ENCODE measurements at regions of chr20 and their contacts with region 1.

Region 1: GRCh38 chr20:37527638-37528441 is at the start of gene BLCAP:
- DNase-seq: peak; percentile 94
- ATAC-seq: peak; percentile 89
- H3K4me3 Mint-ChIP-seq: peak within 1 kb of the TSS; percentile 76
- H3K27ac Mint-ChIP-seq: peak within 1 kb of the TSS; percentile 98
- H3K4me1 Mint-ChIP-seq: peaks cover 43% of the 10 kb centered on the region
- H3K27me3 Mint-ChIP-seq: no peaks in the 10 kb centered on the region
- total RNA-seq, gene BLCAP: 17.7 to 18.6 TPM

Region 2: DNA sequence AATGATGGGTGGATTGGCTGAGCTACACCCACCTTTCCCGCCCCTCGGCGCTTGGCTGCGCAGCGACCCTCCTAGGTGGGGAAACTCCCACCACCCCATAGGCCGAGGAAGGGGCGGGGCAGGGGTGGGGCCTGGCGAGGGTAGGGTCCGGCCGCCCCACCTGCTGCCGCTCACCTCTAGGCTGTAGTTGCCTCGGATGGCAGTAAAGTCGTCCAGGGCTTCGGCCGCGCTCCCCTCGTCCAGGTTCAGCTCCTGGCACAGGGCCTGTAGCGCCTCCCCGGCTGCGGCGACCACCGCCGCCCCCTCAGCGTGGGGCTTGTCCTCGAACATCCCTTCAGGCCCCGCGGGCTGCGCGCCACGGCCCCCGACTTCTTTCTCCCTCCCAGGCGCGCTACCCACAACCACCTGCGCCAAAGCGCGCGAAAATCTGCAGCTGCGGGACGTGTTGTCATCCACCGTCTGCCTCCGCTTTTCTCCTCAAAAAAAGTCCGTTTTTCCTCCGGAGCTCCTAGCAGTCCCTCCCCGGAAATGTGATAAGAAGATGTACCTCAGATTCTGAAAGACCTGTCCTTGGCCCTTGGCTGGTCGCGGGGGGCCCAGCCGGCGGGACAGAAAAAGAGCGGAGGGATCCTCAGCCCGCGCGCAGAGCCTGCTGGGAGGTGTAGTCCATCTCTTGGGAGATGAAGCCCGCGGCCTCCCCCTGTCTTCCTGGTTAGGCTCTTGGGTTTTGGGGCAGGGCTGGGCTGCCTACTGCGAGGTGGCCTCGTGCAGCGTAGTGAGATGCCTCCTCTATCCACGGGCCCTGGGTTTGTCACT is 432.0 kb before region 1 on chr20 and contains the start of gene RBL1:
- CTCF ChIA-PET with region 1: no interaction called
- POLR2A ChIA-PET with region 1: no interaction called
- intact Hi-C with region 1: loop called in 1 of 2 experiments (anchors 1 kb)
- DNase-seq: peak; percentile 94
- ATAC-seq: peak; percentile 83
- H3K4me3 Mint-ChIP-seq: peak within 1 kb of the TSS; percentile 95
- H3K27ac Mint-ChIP-seq: peak within 1 kb of the TSS; percentile 100
- H3K4me1 Mint-ChIP-seq: peaks cover 26% of the 10 kb centered on the region
- H3K27me3 Mint-ChIP-seq: no peaks in the 10 kb centered on the region
- total RNA-seq, gene RBL1: 39.5 to 43.2 TPM

Region 3: GRCh38 chr20:37288091-37288490 is 239.7 kb before region 1 on chr20:
- CTCF ChIA-PET with region 1: no interaction called
- POLR2A ChIA-PET with region 1: no interaction called
- intact Hi-C with region 1: loop called (anchors 1 to 5 kb)
- DNase-seq: no peak
- ATAC-seq: no peak
- H3K4me3 Mint-ChIP-seq: no peak overlapping the region
- H3K27ac Mint-ChIP-seq: no peak overlapping the region
- H3K4me1 Mint-ChIP-seq: peaks cover 22% of the 10 kb centered on the region
- H3K27me3 Mint-ChIP-seq: peaks cover 3% of the 10 kb centered on the region

Region 4: GRCh38 chr20:37384683-37385174 is 143.1 kb before region 1 on chr20:
- CTCF ChIA-PET with region 1: interaction called, 4 read pairs
- POLR2A ChIA-PET with region 1: no interaction called
- intact Hi-C with region 1: loop called in 1 of 2 experiments (anchors 1 kb)
- DNase-seq: peak; percentile 86
- ATAC-seq: peak; percentile 94
- H3K4me3 Mint-ChIP-seq: peak overlapping the region; percentile 59
- H3K27ac Mint-ChIP-seq: peak overlapping the region; percentile 43
- H3K4me1 Mint-ChIP-seq: peaks cover 8% of the 10 kb centered on the region
- H3K27me3 Mint-ChIP-seq: peaks cover 4% of the 10 kb centered on the region

Region 5: DNA sequence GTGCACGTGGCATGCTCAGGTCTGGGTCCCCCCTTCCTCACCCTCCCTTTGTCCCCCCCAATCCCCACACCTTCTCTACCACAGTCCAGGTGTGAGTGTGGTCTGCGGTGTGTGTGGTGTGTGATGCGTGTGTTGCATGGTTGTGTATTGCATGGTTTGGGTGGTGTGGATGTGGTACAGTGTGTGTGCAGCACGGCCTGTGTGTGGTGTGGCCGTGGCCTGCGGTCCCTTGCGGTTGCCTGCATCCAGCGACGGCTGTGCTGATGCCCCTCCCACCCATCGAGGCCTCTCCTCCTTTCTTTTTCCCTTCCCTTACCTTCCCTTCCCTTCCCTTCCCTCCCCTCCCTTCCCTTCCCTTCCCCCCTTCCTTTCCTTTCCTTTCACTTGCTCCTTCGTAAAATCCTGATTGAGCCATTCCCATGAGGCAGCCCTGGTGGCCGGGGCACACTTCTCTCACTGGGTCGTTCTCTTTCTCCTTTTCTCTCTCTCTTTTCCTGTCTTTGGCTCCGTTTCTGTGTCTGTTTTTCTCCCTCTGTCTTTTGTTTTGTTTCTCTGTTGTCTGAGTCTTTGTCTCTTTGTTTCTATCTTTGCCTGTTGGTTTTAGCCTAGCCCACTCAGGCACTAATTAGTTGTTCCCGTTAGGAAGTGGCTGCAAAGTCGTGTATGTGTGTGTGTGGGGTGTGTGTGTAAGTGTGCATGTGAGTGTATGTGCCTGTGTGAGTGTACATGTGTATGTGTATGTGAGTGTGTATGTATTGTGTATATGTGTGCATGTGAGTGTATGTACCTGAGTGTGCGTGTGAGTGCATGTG is 116.2 kb before region 1 on chr20:
- CTCF ChIA-PET with region 1: no interaction called
- POLR2A ChIA-PET with region 1: no interaction called
- intact Hi-C with region 1: loop called (anchors 5 kb)
- DNase-seq: peak; percentile 38
- ATAC-seq: peak; percentile 30
- H3K4me3 Mint-ChIP-seq: no peak overlapping the region
- H3K27ac Mint-ChIP-seq: no peak overlapping the region
- H3K4me1 Mint-ChIP-seq: peaks cover 7% of the 10 kb centered on the region
- H3K27me3 Mint-ChIP-seq: peaks cover 21% of the 10 kb centered on the region

Region 6: DNA sequence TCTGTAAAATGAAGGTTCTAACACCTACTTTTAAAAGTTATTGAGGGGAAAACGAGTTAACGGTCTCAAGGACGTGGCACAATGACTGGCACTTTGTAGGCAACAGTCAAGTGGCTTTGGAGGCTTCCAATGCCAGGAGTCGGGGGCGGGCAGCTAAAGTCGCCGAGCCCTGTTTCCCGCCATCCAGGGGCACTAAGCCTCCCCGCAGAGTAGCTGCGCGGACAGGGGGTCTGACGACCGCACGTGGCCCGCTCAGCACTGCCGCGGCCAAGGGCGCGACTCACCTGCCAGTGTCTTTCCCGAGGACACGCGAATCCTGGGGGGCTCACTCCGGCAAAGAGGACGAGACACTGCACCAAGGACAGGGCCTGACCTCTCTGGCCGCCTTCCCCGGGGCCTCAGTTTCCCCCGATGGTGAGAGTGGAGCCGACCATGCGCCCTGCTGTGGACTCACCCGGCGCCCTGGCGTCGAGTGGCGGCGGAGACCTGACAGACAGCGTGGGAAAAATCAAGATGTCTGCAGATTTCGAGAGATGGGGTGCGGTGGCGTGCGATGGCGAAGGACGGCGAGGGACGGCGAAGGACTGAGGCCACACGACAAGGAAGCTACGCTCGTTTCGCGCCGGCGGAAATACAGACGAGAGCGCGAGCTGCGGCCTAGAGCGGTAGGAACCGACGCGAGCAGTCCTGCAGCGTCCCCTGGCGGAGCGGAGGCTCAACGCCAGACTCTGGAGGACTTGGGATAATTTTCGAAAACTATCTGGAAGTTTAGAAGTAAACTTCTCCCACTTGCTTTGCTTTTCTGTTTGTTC is 907.1 kb after region 1 on chr20 and contains the start of gene SNHG17:
- CTCF ChIA-PET with region 1: no interaction called
- POLR2A ChIA-PET with region 1: no interaction called
- intact Hi-C with region 1: loop called in 1 of 2 experiments (anchors 10 kb)
- DNase-seq: peak; percentile 94
- ATAC-seq: peak; percentile 84
- H3K4me3 Mint-ChIP-seq: peak within 1 kb of the TSS; percentile 97
- H3K27ac Mint-ChIP-seq: peak within 1 kb of the TSS; percentile 98
- H3K4me1 Mint-ChIP-seq: peaks cover 39% of the 10 kb centered on the region
- H3K27me3 Mint-ChIP-seq: peaks cover 4% of the 10 kb centered on the region
- total RNA-seq, gene SNHG17: 70.7 to 72.4 TPM